Activated CD4-positive, alpha-beta memory T cell treated with anti-CD3 and anti-CD28 coated beads for 36 hours (primary cell): ENCODE measurements at regions of chr13 and their contacts with region 1.

Region 1: GRCh38 chr13:105070452-105070851 is 1465.0 kb downstream of the EFNB2 start:
- DNase-seq: no peak
- H3K4me3 Mint-ChIP-seq: no peak overlapping the region
- H3K27ac Mint-ChIP-seq: no peak overlapping the region
- H3K4me1 Mint-ChIP-seq: no peaks in the 10 kb centered on the region
- H3K27me3 Mint-ChIP-seq: no peaks in the 10 kb centered on the region

Region 2: DNA sequence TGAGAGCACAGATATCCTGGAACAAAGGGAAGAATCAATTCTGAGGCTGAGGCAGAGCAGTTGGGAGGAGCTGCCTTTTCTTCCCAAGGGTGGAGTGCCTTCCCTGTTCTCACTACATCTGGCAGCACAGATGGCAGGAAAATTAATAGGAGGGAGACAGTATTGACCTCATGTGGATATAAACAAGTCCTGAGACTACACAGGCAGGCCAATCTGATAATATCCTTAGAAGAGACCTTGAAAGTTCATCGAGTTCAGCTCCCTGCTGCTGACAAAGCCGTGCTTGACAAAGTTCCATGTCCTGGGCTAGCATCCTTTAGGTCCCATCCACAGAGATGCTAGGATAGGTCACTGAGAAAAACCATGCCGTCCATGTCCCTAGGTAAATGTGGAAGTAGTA is 13.5 kb after region 1 on chr13:
- CTCF ChIA-PET with region 1: no interaction called
- POLR2A ChIA-PET with region 1: no interaction called
- intact Hi-C with region 1: loop called (anchors 1 kb)
- DNase-seq: no peak
- H3K4me3 Mint-ChIP-seq: no peak overlapping the region
- H3K27ac Mint-ChIP-seq: no peak overlapping the region
- H3K4me1 Mint-ChIP-seq: no peaks in the 10 kb centered on the region
- H3K27me3 Mint-ChIP-seq: no peaks in the 10 kb centered on the region

Region 3: DNA sequence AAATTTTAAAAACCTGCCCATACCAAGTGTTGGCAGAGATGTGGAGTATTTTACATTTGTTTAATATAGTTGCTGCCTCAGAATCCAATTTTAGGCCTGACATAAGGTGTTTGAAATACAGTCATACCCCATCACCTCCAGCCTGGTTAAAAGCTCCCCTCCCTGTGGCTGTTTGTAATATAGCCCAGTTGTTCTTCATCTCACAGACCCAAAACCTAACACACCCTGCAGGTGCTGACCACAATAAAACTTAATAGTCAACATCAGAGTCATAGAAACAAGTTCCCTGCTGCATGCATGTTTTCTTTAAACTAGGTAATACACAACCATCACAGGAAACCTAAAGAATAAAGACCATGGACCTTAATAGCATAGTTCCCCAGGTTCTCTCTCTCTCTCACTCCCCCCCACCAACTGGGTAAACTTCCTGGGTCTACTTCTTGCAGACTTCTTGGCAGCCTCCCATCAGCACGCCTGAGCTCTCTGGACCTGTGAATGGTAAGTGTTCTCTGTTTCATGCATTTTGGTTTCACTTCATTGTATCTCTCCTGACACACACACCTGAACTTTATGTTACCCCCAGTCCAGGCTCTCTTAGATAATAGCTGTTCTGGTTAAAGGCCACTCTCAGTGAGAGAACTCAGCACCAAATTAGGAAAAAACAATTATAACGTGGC is 95.1 kb after region 1 on chr13:
- CTCF ChIA-PET with region 1: no interaction called
- POLR2A ChIA-PET with region 1: no interaction called
- intact Hi-C with region 1: no loop called
- DNase-seq: no peak
- H3K4me3 Mint-ChIP-seq: no peak overlapping the region
- H3K27ac Mint-ChIP-seq: no peak overlapping the region
- H3K4me1 Mint-ChIP-seq: no peaks in the 10 kb centered on the region
- H3K27me3 Mint-ChIP-seq: peaks cover 16% of the 10 kb centered on the region

Region 4: DNA sequence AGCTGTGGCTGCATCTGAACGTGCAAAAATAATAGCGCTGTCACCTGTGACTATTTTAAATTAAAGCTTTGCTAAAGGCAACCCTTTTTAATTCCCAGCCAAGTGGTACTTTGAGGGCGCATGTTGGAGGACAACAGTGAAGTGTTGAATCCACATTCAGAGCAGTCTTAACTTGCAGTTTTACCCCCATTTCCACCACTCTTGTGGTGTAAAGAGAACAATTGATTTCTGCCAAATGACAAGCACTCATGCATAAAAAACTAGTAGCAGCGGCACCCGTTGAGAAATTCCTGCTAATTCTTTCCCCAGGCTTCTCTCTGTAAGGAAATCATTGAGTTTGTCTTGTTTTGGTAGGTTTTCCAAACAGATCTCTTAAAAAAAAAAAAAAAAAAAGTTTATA is 431.7 kb after region 1 on chr13:
- CTCF ChIA-PET with region 1: no interaction called
- POLR2A ChIA-PET with region 1: no interaction called
- intact Hi-C with region 1: no loop called
- DNase-seq: no peak
- H3K4me3 Mint-ChIP-seq: no peak overlapping the region
- H3K27ac Mint-ChIP-seq: no peak overlapping the region
- H3K4me1 Mint-ChIP-seq: no peaks in the 10 kb centered on the region
- H3K27me3 Mint-ChIP-seq: no peaks in the 10 kb centered on the region

Region 5: GRCh38 chr13:106709522-106709921 is 1639.1 kb after region 1 on chr13:
- CTCF ChIA-PET with region 1: no interaction called
- POLR2A ChIA-PET with region 1: no interaction called
- intact Hi-C with region 1: no loop called
- DNase-seq: no peak
- H3K4me3 Mint-ChIP-seq: no peak overlapping the region
- H3K27ac Mint-ChIP-seq: no peak overlapping the region
- H3K4me1 Mint-ChIP-seq: no peaks in the 10 kb centered on the region
- H3K27me3 Mint-ChIP-seq: peaks cover 2% of the 10 kb centered on the region